Tibial artery (tissue), 4 donors: ENCODE measurements at regions of chr2 and their contacts with region 1.

Region 1: DNA sequence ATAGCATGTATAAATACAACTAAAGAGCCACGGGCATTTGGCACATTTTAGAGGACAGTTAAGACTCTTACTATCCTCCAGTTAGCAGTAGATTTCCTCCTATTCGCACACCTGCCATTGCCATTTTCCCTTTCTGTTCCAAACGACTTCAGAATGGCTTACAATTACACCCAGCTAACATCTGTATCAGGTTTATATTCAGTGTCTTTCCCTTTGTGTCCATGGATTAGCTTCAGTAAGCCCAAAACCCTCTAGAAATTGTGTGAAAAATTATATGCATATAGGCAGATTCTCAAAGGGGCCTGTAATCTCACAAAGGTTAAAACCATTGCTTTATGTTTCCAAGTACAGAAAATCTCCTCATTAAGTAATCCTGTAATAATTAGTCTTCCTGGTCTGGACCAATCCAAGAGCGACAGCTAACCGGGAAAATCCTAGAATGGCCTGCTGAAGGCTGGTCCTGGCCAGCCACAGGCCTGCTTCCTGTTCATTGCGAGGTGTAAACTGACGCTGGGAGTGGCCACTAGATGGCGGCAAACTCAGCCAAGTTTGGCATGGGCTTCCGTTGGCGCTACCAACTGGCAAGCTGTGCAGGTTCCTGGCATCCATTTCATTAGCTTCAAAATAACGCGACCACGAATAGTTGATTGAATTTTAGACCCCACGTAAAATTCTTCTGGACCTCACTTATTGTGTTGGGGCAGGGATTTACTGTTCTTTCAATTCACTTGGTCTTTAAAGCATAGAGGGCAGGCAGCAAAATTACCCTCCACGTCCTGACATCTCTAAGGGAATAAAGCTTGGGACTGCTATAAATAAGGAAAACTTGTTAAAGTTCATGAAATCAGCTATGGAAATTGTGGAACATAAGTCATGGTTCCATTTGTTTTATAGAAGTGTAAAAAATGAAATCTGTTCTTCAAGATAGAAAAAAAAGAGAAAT is 17.1 kb downstream of the ARHGAP25 start:
- DNase-seq: peak; percentile 89 to 94
- H3K4me3 ChIP-seq: no peak overlapping the region
- H3K27ac ChIP-seq: peak overlapping the region in 1 of 2 donors; percentile 4
- H3K4me1 ChIP-seq: peaks cover 0 to 8% (median 1%) of the 10 kb centered on the region in 4 donors
- H3K27me3 ChIP-seq: no peaks in the 10 kb centered on the region
- CTCF ChIP-seq: peak; percentile 87 to 92

Region 2: GRCh38 chr2:68837164-68837860 is 85.6 kb after region 1 on chr2:
- intact Hi-C with region 1: loop called (anchors 5 kb)
- DNase-seq: peak; percentile 69 to 74
- H3K4me3 ChIP-seq: no peak overlapping the region
- H3K27ac ChIP-seq: no peak overlapping the region
- H3K4me1 ChIP-seq: peaks cover 0 to 9% (median 5%) of the 10 kb centered on the region in 4 donors
- H3K27me3 ChIP-seq: no peaks in the 10 kb centered on the region
- CTCF ChIP-seq: peak; percentile 56 to 57

Region 3: DNA sequence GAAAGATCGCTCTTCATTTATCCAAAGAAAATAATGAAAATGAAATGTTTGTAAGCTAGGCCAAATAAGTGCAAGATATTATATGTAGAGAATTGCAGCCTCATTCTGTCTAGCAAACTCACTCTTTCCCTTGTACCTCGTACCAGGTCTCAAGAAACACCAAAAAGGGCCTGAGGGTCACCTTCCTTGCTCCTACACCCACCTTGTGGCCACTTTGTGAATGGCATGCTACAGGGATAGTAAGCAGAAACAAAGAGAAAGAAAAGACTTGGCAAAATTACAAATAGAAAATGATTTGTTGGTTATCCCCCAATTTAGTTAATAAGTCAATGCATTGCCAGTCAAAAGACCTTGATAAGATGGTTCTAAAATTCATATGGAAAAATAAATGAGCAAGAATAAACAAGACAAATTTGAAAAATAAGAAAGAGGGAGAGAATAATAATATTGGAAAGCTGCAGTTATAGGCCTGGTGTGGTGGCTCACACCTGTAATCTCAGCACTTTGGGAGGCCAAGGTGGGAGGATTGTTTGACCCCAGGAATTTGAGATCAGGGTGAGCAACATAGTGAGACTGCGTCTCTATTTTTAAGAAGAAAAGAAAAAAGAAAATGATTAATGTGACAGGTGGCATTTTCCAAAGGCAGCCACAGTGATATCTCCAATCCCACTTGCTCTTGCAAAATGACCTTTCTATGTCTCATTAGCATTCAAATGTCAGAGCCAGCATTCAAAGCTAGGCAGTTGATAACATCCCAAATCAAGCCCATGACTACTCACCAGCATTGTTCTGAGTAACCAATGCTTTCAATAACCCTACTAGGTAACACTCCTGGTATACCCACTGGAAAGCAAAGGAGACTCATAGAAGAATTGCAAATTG is 158.4 kb after region 1 on chr2:
- intact Hi-C with region 1: loop called (anchors 5 kb)
- DNase-seq: peak; percentile 76 to 78
- H3K4me3 ChIP-seq: no peak overlapping the region
- H3K27ac ChIP-seq: no peak overlapping the region
- H3K4me1 ChIP-seq: peaks cover 0 to 19% (median 13%) of the 10 kb centered on the region in 4 donors
- H3K27me3 ChIP-seq: no peaks in the 10 kb centered on the region
- CTCF ChIP-seq: peak; percentile 84 to 88

Region 4: GRCh38 chr2:68925295-68925896 is 173.7 kb after region 1 on chr2:
- intact Hi-C with region 1: loop called (anchors 5 kb)
- DNase-seq: no peak
- H3K4me3 ChIP-seq: no peak overlapping the region
- H3K27ac ChIP-seq: no peak overlapping the region
- H3K4me1 ChIP-seq: no peaks in the 10 kb centered on the region
- H3K27me3 ChIP-seq: no peaks in the 10 kb centered on the region
- CTCF ChIP-seq: peak; percentile 89 to 90